AG04450 (cell line): ENCODE measurements at regions of chr2 and their contacts with region 1.

Region 1: DNA sequence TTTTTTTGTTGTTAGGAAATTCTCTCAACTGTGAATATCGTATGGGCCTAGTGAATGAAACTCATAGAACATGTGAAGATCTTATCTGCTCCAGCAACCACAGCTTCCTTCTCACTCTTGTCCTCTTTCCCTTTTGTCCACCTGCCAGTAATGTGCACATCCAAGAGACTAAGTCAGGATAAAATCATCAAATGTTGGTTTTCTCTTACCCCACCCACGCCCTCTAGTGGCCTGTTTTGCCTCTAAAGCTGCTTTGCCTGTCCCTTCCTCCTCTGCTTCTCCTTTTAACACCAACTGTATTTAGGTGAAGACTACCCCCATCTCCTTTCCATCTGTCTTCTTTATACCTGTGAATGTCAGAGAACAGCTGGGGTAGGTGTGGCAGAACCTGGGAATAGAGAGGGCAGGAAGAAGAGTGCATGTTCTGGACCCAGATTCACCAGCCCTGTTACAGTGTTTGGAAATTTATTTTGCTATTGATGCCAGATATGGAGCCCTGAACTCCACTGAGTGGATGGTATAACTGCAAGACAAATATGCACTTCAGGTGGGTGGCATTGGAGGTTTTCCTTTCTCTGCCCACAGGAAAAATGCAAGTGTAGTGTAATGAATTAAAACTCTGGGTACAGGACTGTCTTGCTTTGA is 8.4 kb upstream of the MGAT5 start:
- DNase-seq: no peak
- H3K4me3 ChIP-seq: no peak overlapping the region
- H3K27ac ChIP-seq: no peak overlapping the region
- H3K27me3 ChIP-seq: no peaks in the 10 kb centered on the region
- CTCF ChIP-seq: peak; percentile 85

Region 2: DNA sequence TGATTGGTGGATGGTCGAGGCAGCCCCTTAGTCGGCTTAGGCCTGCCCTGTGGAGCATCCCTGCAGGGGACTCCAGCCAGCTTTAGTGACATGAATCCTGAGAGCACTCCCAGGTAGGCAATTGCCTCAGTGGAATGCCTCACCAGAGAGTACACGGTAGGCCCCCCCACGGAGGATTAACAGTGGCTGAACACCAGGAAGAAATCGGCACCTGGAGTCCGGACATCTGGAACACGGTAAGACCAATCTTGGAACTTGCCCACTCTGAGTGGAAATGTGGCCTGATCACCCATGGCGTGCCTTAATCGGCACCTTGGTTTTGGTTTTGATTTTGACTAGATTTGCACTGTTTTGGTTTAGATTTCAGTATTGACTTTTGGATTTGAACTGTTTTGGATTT is 351.0 kb before region 1 on chr2:
- CTCF ChIA-PET with region 1: no interaction called
- POLR2A ChIA-PET with region 1: no interaction called
- DNase-seq: no peak
- H3K4me3 ChIP-seq: no peak overlapping the region
- H3K27ac ChIP-seq: no peak overlapping the region
- H3K27me3 ChIP-seq: peaks cover 2% of the 10 kb centered on the region
- CTCF ChIP-seq: no peak

Region 3: DNA sequence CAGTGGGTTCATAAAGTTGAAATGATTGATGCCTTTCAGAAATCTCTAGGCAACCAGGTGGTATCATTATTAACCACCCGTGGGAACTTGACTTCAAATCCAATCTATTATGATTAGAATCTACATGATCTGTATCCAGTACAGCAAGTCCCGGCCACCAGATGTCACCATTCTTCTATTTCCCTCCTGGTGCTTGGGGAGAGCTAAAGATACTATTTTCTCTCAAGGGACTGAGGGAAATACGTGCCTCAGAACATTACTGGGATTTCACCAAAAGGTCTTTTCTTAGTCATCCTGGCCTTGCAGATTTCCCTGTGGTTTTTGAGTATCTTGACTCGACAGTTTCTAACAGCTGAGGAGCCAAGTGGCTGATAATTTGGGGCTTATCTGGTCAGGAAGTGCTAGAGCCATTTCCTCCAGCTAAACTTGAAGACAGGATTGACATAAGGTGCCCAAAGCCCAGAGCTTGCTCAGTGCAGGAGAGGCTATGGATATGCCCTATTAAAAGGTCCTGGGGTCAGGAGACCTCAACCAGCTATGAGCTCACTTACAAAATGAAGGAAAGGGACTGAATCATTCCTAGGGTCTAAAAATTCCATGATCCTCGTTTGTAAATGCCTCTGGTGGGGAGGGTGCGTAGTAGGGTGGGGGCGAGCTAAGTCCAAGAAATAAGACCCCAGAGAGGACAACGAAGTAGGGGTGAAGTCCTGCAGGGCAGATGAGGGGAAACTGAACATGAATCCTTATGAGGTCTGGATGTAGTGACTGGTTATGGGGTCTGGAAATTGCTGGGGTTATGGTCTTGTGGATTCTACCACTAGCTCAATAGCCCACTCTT is 127.0 kb before region 1 on chr2:
- CTCF ChIA-PET with region 1: interaction called, 50 read pairs
- POLR2A ChIA-PET with region 1: interaction called, 3 read pairs
- DNase-seq: peak; percentile 90
- H3K4me3 ChIP-seq: no peak overlapping the region
- H3K27ac ChIP-seq: peak overlapping the region; percentile 69
- H3K27me3 ChIP-seq: no peaks in the 10 kb centered on the region
- CTCF ChIP-seq: peak; percentile 81

Region 4: GRCh38 chr2:134224005-134224404 is 21.5 kb before region 1 on chr2:
- CTCF ChIA-PET with region 1: interaction called, 16 read pairs
- POLR2A ChIA-PET with region 1: interaction called, 7 read pairs
- DNase-seq: peak; percentile 46
- H3K4me3 ChIP-seq: no peak overlapping the region
- H3K27ac ChIP-seq: no peak overlapping the region
- H3K27me3 ChIP-seq: no peaks in the 10 kb centered on the region
- CTCF ChIP-seq: no peak

Region 5: DNA sequence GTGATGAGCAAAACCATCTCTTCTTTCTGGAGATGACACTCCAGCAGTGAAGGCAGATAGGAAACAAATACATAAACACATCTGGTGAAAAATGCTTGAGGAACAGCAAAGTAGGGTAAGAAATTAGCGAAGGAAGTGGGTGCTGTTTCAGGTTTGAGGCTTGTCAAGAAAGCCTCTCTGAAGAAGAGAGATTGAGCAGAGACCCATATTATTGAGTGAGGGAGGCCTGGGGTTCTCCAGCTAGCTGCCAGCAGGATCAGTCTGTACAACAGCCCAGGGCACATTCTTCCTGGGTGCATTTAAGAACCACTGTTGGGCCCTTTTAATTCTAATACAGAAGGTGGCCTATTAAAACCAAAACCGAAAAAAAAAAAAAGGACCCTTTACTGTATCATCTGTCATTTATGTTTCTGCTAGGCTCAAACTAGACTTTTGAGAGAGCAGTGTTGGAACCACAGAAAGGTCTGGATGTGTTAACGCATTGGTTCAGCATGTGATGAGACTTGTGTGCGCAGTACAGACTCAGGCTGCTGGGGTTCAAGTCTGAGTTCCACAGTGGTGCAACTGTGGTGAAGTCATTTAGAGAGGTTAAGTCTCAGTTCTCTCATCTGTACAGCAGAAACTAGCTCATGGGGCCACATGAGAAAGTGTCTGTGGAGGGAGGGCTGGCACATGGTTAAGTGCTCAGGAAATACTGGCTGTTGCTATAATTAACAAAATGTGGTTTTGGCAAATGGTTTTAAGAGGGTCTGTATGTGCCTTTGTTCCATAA is 37.4 kb after region 1 on chr2:
- CTCF ChIA-PET with region 1: interaction called, 18 read pairs
- POLR2A ChIA-PET with region 1: no interaction called
- DNase-seq: no peak
- H3K4me3 ChIP-seq: no peak overlapping the region
- H3K27ac ChIP-seq: no peak overlapping the region
- H3K27me3 ChIP-seq: no peaks in the 10 kb centered on the region
- CTCF ChIP-seq: no peak

Region 6: GRCh38 chr2:134657637-134658250 is 412.3 kb after region 1 on chr2:
- CTCF ChIA-PET with region 1: no interaction called
- POLR2A ChIA-PET with region 1: no interaction called
- DNase-seq: no peak
- H3K4me3 ChIP-seq: no peak overlapping the region
- H3K27ac ChIP-seq: no peak overlapping the region
- H3K27me3 ChIP-seq: no peaks in the 10 kb centered on the region
- CTCF ChIP-seq: peak; percentile 31; the same call in 1 of the 2 replicates